Head of caudate nucleus (tissue), 42 donors: ENCODE measurements at regions of chr2 and their contacts with region 1.

Region 1: GRCh38 chr2:68870215-68870614 is 982 bp downstream of the BMP10 start:
- DNase-seq: no peak

Region 2: GRCh38 chr2:68915393-68915792 is 45.2 kb after region 1 on chr2:
- intact Hi-C with region 1: loop called (anchors 2 kb)
- DNase-seq: no peak